Transverse colon (tissue), 4 donors: ENCODE measurements at regions of chr11 and their contacts with region 1.

Region 1: DNA sequence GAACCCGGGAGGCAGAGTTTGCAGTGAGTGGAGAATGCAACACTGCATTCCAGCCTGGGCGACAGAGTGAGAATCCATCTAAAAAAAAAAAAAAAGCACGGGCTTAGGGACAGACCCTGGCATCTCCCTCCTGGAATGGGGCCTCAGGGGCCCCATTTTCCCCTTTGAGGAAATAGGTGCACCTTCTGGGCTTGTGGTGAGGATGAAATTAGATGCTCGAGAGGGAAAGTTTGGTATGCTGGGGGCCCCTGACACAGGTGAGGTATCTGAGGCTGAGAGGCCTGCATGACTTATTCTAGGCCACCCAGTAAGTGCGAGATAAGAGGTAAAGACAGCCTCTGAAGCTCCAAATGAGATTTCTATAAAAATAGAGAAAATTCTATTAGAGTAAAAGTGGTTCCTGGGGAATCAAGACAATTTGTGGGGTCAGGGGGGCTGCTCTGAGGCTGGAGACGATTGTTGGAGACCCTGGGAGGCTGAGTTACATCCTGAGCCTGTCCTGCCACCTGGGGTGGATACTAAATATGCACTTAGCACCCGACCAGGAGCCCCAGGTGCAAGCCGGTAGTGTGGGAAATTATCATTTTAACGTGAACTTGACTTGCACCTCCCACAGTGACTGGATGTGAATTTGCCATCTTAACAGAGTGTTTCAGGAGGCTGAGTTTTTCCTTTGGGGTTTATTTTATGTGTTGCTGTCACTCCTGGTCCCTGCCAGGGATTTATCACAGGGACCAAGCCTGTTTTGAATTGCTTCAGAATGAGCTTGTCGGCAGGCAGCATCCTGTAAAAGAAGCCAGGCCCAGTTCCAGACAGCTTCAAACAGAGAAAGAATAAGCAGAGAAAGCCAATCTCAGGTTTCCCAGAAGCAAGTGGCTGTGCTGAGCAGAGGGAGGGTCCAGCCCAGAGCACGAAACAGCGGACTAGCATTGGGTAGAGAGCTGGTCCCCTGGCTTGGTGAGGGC is 48.4 kb upstream of the TSKU start:
- DNase-seq: no peak
- H3K4me3 ChIP-seq: no peak overlapping the region
- H3K27ac ChIP-seq: no peak overlapping the region
- H3K4me1 ChIP-seq: peaks cover 0 to 3% (median 0%) of the 10 kb centered on the region in 4 donors
- H3K27me3 ChIP-seq: no peaks in the 10 kb centered on the region
- CTCF ChIP-seq: no peak
- EP300 ChIP-seq: no peak
- POLR2A ChIP-seq: no peak

Region 2: DNA sequence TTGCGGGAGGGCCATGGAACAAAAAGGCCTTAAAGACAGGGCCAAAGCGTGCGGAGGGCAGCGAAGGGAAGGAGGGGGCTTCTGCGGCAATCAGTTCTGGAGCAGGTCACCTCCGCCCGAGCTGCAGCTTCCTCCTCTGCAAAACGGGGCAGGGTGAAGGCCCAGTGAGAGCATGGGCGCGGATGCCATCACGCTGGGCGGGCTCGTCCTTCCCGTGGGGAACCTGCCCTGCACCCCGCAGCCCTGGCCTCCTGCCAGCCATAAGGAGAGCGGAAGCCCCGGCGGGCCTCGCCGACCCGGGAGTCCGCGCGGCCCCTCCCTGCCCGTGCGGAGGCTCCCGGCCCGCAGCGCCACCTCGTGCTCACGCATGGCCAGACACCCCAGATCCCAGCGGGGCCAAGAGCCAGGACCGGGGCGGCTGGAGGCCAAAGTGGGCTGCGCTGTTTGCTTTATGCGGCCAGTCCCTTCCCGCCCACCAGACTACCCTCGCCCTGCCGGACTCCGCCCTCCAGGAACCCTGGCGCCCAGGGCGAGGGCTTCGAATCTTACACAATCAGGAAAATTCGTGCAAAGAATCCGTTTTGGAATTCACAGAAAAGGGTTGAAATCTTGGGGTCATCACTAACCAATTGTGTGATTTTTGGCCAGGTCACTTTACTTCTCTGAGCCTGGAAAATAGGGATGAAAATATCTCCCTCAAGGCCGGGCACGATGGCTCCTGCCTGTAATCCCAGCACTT is 64.5 kb after region 1 on chr11:
- in situ Hi-C with region 1: loop called in 3 of 4 experiments (anchors 5 kb)
- intact Hi-C with region 1: loop called (anchors 2 kb)
- DNase-seq: peak; percentile 88
- H3K4me3 ChIP-seq: peak overlapping the region in 2 of 4 donors; percentile 20 to 32
- H3K27ac ChIP-seq: peak overlapping the region; percentile 29 to 63 (median 52)
- H3K4me1 ChIP-seq: peaks cover 10 to 39% (median 28%) of the 10 kb centered on the region in 4 donors
- H3K27me3 ChIP-seq: no peaks in the 10 kb centered on the region
- CTCF ChIP-seq: peak; percentile 87 to 97 (median 93)
- EP300 ChIP-seq: no peak
- POLR2A ChIP-seq: no peak

Region 3: DNA sequence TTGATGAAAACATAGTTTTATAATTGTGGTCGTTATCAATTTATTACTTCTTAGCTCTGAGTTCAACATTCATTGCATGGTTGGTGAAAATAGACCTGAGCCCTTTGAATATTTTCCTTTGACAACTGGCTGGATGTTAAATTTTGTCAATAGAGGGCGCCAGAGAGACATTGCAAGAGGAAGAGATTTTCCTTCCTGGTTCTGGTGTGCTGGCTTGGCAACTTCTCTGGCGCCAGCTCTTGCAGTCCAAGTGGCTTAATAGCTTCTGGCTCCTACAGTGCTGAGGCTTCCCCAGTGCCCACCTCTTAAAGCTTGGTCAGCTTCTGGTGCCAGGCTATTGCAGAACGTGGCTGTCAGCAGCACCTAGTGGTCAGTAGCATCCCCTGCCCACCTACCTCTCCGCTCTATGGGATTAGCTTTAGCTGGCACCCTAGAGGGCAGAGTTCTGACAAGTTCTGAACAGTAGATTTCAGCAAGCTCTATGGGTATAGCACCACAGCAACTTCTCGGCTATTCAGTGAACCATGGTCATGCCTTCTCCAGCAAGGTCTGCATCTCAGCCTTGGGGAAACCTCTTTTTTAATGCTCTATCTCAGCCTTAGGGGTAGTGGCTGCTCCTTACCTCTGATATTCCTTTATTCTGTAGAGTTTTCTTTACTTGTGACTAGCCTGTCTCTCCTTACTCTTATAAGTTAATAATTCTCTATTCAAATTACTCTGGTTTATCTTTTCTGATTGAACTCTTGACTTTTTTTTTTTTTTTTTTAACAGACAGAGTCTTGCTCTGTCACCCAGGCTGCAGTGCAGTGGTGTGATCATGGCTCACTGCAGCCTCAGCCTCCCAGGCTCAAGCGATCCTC is 185.4 kb after region 1 on chr11:
- in situ Hi-C with region 1: loop called in 2 of 4 experiments (anchors 10 kb)
- intact Hi-C with region 1: loop called (anchors 10 kb)
- DNase-seq: peak; percentile 79
- H3K4me3 ChIP-seq: peak overlapping the region in 1 of 4 donors; percentile 33
- H3K27ac ChIP-seq: peak overlapping the region; percentile 54 to 83 (median 70)
- H3K4me1 ChIP-seq: peaks cover 3 to 32% (median 15%) of the 10 kb centered on the region in 4 donors
- H3K27me3 ChIP-seq: no peaks in the 10 kb centered on the region
- CTCF ChIP-seq: peak; percentile 84 to 92 (median 89)
- EP300 ChIP-seq: no peak
- POLR2A ChIP-seq: no peak